ENCODE measurements at regions of chr2 and their contacts with region 1.

Region 1: GRCh38 chr2:179449010-179449409 is 184.4 kb upstream of the SESTD1 start:
- DNase-seq: no peak
- ATAC-seq: no peak
- H3K4me3 ChIP-seq: no peak overlapping the region
- H3K27ac ChIP-seq: no peak overlapping the region
- H3K4me1 ChIP-seq: peaks cover 36% of the 10 kb centered on the region
- H3K27me3 ChIP-seq: no peaks in the 10 kb centered on the region
- CTCF ChIP-seq: no peak

Region 2: GRCh38 chr2:179435000-179435399 is 14.0 kb before region 1 on chr2:
- CTCF ChIA-PET with region 1: no interaction called
- POLR2A ChIA-PET with region 1: no interaction called
- intact Hi-C with region 1: no loop called
- DNase-seq: no peak
- ATAC-seq: no peak
- H3K4me3 ChIP-seq: no peak overlapping the region
- H3K27ac ChIP-seq: no peak overlapping the region
- H3K4me1 ChIP-seq: no peaks in the 10 kb centered on the region
- H3K27me3 ChIP-seq: no peaks in the 10 kb centered on the region
- CTCF ChIP-seq: no peak

Region 3: GRCh38 chr2:179569831-179570233 is 120.8 kb after region 1 on chr2:
- CTCF ChIA-PET with region 1: no interaction called
- POLR2A ChIA-PET with region 1: no interaction called
- intact Hi-C with region 1: loop called (anchors 5 kb)
- DNase-seq: peak; percentile 68
- ATAC-seq: no peak
- H3K4me3 ChIP-seq: no peak overlapping the region
- H3K27ac ChIP-seq: no peak overlapping the region
- H3K4me1 ChIP-seq: peaks cover 27% of the 10 kb centered on the region
- H3K27me3 ChIP-seq: no peaks in the 10 kb centered on the region
- CTCF ChIP-seq: no peak

Region 4: DNA sequence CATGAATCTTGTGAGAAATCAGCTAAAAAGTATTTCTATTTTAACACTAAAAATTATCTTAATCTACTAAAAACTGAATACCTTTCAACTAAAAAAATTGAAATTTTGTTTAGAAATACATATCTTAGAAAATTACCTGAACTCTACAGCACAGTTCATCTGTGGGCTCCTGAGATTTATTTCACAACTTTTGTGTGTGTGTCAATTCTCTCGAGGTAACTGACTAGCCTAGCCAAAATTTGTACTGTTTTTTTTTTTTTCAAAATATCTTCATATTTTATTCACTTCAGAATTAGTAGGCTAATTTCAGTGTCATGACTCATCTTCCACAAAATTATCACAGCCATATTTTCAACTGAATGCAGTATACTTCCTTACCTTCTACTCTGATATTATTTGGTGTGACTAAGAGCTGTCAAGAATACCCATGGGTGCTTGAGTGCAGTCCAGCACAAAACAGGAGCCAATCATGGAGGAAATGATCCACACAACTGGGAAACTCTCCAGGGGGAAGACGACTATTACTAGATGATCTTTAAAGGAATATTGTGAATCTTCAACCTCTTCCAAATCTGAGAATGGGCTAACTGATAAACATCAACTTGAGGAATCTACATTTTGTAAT is 237.8 kb after region 1 on chr2:
- CTCF ChIA-PET with region 1: no interaction called
- POLR2A ChIA-PET with region 1: no interaction called
- intact Hi-C with region 1: loop called (anchors 5 kb)
- DNase-seq: peak; percentile 53
- ATAC-seq: peak; percentile 65
- H3K4me3 ChIP-seq: no peak overlapping the region
- H3K27ac ChIP-seq: no peak overlapping the region
- H3K4me1 ChIP-seq: peaks cover 19% of the 10 kb centered on the region
- H3K27me3 ChIP-seq: no peaks in the 10 kb centered on the region
- CTCF ChIP-seq: no peak

Region 5: GRCh38 chr2:179741317-179741716 is 292.3 kb after region 1 on chr2:
- CTCF ChIA-PET with region 1: no interaction called
- POLR2A ChIA-PET with region 1: no interaction called
- intact Hi-C with region 1: no loop called
- DNase-seq: no peak
- ATAC-seq: no peak
- H3K4me3 ChIP-seq: no peak overlapping the region
- H3K27ac ChIP-seq: no peak overlapping the region
- H3K4me1 ChIP-seq: no peaks in the 10 kb centered on the region
- H3K27me3 ChIP-seq: no peaks in the 10 kb centered on the region
- CTCF ChIP-seq: no peak

Measured in PC-3 (cell line).